Caco-2 (cell line): ENCODE measurements at regions of chr17 and their contacts with region 1.

Region 1: GRCh38 chr17:56176096-56176495 is 22.8 kb downstream of the ANKFN1 start:
- DNase-seq: peak; percentile 71 to 83
- H3K4me3 ChIP-seq: no peak overlapping the region
- H3K4me3 Mint-ChIP-seq: peak overlapping the region; percentile 47
- H3K27ac Mint-ChIP-seq: peak overlapping the region; percentile 74
- H3K4me1 ChIP-seq: peaks cover 42% of the 10 kb centered on the region
- H3K4me1 Mint-ChIP-seq: peaks cover 38% of the 10 kb centered on the region
- H3K27me3 ChIP-seq: no peaks in the 10 kb centered on the region
- H3K27me3 Mint-ChIP-seq: no peaks in the 10 kb centered on the region
- CTCF ChIP-seq: no peak

Region 2: DNA sequence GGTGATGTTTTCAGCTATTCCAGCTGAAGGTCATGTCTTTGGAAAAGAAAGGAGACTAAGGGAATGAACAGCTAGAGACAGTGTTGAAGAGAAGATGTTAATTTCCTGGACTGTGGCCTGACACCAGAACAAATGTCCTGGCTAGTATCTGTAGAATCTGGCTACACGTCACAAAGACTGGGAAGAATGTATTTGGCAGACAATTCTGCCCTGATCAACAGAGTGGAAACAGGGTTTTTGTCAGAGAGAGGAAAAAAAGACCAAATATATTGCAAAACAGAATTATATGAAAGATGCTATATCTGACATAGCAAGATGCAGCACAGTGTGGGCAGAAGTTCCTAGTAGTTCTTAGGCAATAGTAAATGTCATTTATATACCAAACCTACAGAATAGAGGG is 39.8 kb before region 1 on chr17:
- CTCF ChIA-PET with region 1: no interaction called
- POLR2A ChIA-PET with region 1: no interaction called
- intact Hi-C with region 1: loop called (anchors 2 kb)
- DNase-seq: no peak
- H3K4me3 ChIP-seq: no peak overlapping the region
- H3K4me3 Mint-ChIP-seq: no peak overlapping the region
- H3K27ac Mint-ChIP-seq: peak overlapping the region; percentile 51
- H3K4me1 ChIP-seq: peaks cover 35% of the 10 kb centered on the region
- H3K4me1 Mint-ChIP-seq: peaks cover 24% of the 10 kb centered on the region
- H3K27me3 ChIP-seq: no peaks in the 10 kb centered on the region
- H3K27me3 Mint-ChIP-seq: no peaks in the 10 kb centered on the region
- CTCF ChIP-seq: no peak

Region 3: GRCh38 chr17:56149266-56150036 is 26.6 kb before region 1 on chr17:
- CTCF ChIA-PET with region 1: interaction called, 3 read pairs
- POLR2A ChIA-PET with region 1: no interaction called
- intact Hi-C with region 1: loop called (anchors 1 kb)
- DNase-seq: no peak
- H3K4me3 ChIP-seq: no peak overlapping the region
- H3K4me3 Mint-ChIP-seq: no peak overlapping the region
- H3K27ac Mint-ChIP-seq: peak overlapping the region; percentile 50
- H3K4me1 ChIP-seq: peaks cover 64% of the 10 kb centered on the region
- H3K4me1 Mint-ChIP-seq: peaks cover 38% of the 10 kb centered on the region
- H3K27me3 ChIP-seq: no peaks in the 10 kb centered on the region
- H3K27me3 Mint-ChIP-seq: no peaks in the 10 kb centered on the region
- CTCF ChIP-seq: no peak

Region 4: DNA sequence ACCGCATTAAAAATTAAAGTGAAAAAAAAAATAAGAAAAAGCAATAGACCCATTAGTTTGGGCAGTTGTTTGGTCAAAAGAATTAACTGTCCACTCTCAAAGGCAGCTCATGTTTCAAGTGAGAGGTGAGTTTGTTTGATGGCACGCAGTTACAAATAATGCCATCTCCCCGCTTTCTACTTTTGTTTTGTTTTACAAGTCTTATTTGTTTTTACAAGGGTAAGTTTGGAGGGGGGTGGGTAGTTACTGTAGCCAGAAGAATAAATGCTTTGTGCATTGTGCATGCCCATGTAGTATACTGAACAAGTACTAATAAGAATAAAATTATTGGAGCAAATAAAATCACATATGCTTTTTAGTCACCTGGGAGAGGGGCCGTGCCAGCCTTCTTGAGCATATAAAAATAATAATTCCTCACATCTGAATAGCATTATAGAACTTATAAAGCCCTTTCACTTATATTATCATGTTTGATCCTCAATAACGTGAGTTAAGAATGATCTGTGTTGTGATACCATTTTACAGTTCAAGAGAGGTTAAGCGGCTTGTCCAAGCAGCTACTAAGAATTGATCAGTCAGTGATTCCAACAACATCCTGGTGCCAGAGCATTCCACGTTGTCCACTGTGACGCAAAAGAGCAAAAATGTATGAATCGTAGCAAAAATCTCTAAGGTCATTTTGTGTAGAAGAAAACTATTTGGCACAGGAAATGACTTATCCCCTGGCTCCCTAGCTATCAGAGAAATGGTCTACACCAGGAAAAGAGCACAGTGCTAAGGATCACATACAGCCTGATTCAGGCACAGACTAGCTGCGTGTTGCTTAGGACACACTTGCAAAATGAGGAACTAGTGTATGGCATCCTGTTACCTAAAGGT is 10.0 kb after region 1 on chr17:
- CTCF ChIA-PET with region 1: no interaction called
- POLR2A ChIA-PET with region 1: no interaction called
- intact Hi-C with region 1: no loop called
- DNase-seq: no peak
- H3K4me3 ChIP-seq: no peak overlapping the region
- H3K4me3 Mint-ChIP-seq: no peak overlapping the region
- H3K27ac Mint-ChIP-seq: no peak overlapping the region
- H3K4me1 ChIP-seq: no peaks in the 10 kb centered on the region
- H3K4me1 Mint-ChIP-seq: no peaks in the 10 kb centered on the region
- H3K27me3 ChIP-seq: no peaks in the 10 kb centered on the region
- H3K27me3 Mint-ChIP-seq: no peaks in the 10 kb centered on the region
- CTCF ChIP-seq: no peak

Region 5: DNA sequence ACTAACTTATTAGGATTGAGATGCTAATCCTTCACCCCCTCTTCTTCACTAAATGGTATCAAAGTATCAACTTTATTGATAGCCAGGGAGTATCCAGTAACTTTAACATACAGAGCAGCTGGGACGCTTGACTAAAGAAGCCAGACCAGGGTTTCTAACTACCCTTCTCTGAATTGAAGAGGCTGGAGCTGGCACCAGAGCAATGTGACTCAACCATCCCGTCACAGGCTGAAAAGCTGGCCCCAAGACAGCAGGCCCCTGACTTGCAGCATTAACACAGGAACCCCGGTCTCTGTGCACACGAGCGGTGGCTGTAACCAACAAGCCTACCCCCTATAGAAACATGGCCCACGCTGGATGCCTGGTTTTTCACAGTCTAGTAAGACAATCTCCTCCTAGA is 36.9 kb after region 1 on chr17:
- CTCF ChIA-PET with region 1: no interaction called
- POLR2A ChIA-PET with region 1: no interaction called
- intact Hi-C with region 1: loop called (anchors 1 kb)
- DNase-seq: no peak
- H3K4me3 ChIP-seq: no peak overlapping the region
- H3K4me3 Mint-ChIP-seq: no peak overlapping the region
- H3K27ac Mint-ChIP-seq: no peak overlapping the region
- H3K4me1 ChIP-seq: 0 out of 2 replicates have a peak, but pooled peaks cover 3% of the 10 kb centered on the region
- H3K4me1 Mint-ChIP-seq: no peaks in the 10 kb centered on the region
- H3K27me3 ChIP-seq: no peaks in the 10 kb centered on the region
- H3K27me3 Mint-ChIP-seq: no peaks in the 10 kb centered on the region
- CTCF ChIP-seq: no peak